ENCODE measurements at regions of chr2 and their contacts with region 1.

Region 1: DNA sequence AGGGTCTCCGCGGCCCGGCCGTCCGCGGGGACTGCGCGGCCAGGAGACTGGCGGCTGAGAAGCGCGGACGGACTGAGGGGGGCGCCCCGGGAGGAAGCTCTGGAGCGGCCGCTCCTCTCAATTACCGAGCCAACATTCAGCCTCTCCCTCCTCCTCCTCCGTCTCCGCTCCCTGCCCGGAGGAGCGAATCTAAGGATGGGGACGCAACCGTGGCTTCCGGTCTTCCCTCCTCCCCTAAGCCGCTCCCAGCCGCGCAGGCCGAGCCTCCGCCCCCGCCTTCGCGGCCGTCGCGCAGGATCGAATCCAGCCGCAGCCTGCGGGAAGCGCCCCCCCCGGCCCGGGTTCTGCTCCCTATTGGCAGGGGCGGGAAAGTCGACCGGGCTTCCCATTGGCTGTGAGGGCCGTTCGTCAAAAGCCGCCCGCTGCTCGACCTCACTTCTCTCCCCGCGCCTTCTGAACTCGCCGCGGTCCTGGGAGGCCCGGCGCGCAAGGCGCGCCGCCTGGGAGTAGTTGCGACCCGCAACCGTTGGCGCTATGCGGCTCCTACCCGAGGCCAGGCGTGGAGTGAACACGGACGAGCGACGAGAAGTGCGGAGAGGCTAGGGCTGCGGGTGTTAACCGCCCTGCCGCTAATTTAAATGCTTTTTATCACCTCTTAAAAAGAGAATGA is at the start of gene HNRNPLL:
- DNase-seq: peak; percentile 99
- H3K4me3 ChIP-seq: peak within 1 kb of the TSS; percentile 66 to 97 (median 74)
- H3K27ac ChIP-seq: peak within 1 kb of the TSS; percentile 86 to 99 (median 95)
- H3K4me1 ChIP-seq: peaks cover 0 to 45% (median 35%) of the 10 kb centered on the region in 4 donors
- H3K27me3 ChIP-seq: no peaks in the 10 kb centered on the region
- CTCF ChIP-seq: no peak
- EP300 ChIP-seq: peak in 1 of 4 donors; percentile 67
- POLR2A ChIP-seq: peak; percentile 94 to 96
- total RNA-seq, gene HNRNPLL: 63.7 to 82.0 (median 72.5) TPM

Region 2: GRCh38 chr2:38377050-38377828 is 225.6 kb before region 1 on chr2 and contains the start of gene ATL2:
- intact Hi-C with region 1: loop called (anchors 5 kb)
- DNase-seq: peak; percentile 98
- H3K4me3 ChIP-seq: peak within 1 kb of the TSS; percentile 80 to 98 (median 92)
- H3K27ac ChIP-seq: peak within 1 kb of the TSS; percentile 98 to 99 (median 99)
- H3K4me1 ChIP-seq: peaks cover 0 to 44% (median 27%) of the 10 kb centered on the region in 4 donors
- H3K27me3 ChIP-seq: no peaks in the 10 kb centered on the region
- CTCF ChIP-seq: no peak
- EP300 ChIP-seq: peak; percentile 13 to 76 (median 26)
- POLR2A ChIP-seq: peak; percentile 89 to 90
- total RNA-seq, gene ATL2: 176 to 271 (median 205) TPM

Region 3: DNA sequence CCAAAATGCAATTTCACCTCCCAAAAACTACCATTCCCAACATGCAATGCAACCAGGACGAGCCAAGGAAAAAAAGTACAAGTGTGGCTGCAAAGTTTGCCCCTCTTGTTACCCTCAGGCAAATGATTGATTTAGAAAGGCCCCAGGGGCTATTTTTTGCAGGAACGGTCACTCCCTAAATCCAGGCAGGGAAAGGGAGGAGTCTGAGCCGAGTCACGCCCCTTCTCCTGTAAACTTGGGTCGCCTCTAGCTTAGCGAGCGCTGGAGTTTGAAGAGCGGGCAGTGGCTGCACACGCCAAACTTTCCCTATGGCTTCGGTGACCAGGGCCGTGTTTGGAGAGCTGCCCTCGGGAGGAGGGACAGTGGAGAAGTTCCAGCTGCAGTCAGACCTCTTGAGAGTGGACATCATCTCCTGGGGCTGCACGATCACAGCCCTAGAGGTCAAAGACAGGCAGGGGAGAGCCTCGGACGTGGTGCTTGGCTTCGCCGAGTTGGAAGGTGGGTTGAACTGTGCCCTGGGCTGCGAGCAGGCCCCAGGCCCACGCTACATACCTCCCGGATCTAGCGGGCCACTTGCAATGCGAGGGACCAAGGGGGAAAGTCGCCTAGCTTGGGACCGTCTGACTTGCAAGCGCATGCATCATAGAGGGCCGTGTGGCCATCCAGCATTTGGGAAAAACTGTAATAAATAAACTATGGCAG is 63.1 kb after region 1 on chr2 and contains the start of gene GALM:
- intact Hi-C with region 1: loop called (anchors 2 kb)
- DNase-seq: peak; percentile 92
- H3K4me3 ChIP-seq: peak within 1 kb of the TSS; percentile 44 to 68 (median 52)
- H3K27ac ChIP-seq: peak within 1 kb of the TSS; percentile 65 to 82 (median 72)
- H3K4me1 ChIP-seq: peaks cover 0 to 20% (median 16%) of the 10 kb centered on the region in 4 donors
- H3K27me3 ChIP-seq: no peaks in the 10 kb centered on the region
- CTCF ChIP-seq: no peak
- EP300 ChIP-seq: peak in 1 of 4 donors; percentile 38
- POLR2A ChIP-seq: peak in 1 of 2 donors; percentile 54
- total RNA-seq, gene GALM: 9.5 to 35.2 (median 19.0) TPM

Region 4: GRCh38 chr2:38702413-38702812 is 99.5 kb after region 1 on chr2:
- intact Hi-C with region 1: no loop called
- DNase-seq: no peak
- H3K4me3 ChIP-seq: no peak overlapping the region
- H3K27ac ChIP-seq: no peak overlapping the region
- H3K4me1 ChIP-seq: peaks cover 0 to 14% (median 5%) of the 10 kb centered on the region in 4 donors
- H3K27me3 ChIP-seq: no peaks in the 10 kb centered on the region
- CTCF ChIP-seq: no peak
- EP300 ChIP-seq: no peak
- POLR2A ChIP-seq: no peak

Region 5: DNA sequence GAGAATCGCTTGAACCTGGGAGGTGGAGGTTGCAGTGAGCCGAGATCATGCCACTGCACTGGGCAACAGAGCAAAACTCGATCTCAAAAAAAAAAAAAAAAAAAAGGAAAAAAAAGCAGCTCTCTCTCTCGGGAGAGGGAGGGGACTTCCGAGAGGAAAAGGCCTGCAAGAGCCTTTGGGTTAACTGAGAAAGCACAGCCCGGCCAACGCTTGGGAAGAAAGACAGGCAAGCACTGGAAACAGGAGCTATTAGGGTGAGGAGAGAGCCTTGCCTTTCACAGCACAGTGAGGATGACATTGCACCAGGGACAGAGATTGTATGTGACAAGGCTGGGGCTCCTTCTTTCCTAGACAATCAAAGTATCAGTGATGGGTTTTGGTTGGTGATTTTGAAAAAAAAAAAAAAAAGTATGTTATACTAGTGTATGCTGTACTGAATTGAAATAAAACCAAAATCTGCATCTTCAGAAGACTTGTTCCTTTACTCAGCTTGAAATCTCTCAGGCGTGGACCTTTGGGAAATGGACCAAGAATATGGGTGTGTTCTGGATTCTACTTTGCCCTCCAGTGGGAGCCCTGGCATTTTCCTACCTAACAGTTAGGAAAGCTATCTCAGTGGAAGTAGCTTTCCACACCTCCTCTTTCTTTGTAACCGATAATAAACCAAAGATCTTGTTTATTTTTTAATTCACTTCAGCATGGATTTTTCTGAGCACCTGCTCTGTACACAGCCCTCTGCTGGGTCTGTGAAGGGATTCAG is 131.6 kb after region 1 on chr2:
- intact Hi-C with region 1: loop called (anchors 5 kb)
- DNase-seq: no peak
- H3K4me3 ChIP-seq: no peak overlapping the region
- H3K27ac ChIP-seq: peak overlapping the region in 3 of 4 donors; percentile 81 to 85 (median 81)
- H3K4me1 ChIP-seq: peaks cover 0 to 40% (median 22%) of the 10 kb centered on the region in 4 donors
- H3K27me3 ChIP-seq: no peaks in the 10 kb centered on the region
- CTCF ChIP-seq: no peak
- EP300 ChIP-seq: no peak
- POLR2A ChIP-seq: no peak

Region 6: DNA sequence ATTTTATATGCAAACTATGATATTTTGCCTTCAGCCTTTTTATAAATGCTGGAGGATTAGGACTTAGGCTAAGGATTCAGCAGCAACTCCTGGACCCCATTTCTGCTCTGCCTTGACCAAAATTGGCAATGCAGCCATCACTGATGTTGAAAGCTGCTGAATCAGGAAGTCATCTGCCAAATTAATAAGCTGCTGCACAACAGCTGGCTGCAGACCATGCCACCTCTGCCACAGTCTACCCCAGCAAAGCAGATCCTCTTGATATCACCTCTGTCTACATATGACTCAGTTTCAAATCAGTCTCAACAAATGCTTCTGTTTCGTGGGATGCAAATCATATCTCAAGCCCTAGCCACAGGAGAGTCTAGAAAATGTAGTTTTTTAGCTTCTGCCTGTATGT is 525.1 kb after region 1 on chr2:
- intact Hi-C with region 1: no loop called
- DNase-seq: no peak
- H3K4me3 ChIP-seq: no peak overlapping the region
- H3K27ac ChIP-seq: peak overlapping the region in 1 of 4 donors; percentile 65
- H3K4me1 ChIP-seq: peaks cover 0 to 13% (median 11%) of the 10 kb centered on the region in 4 donors
- H3K27me3 ChIP-seq: no peaks in the 10 kb centered on the region
- CTCF ChIP-seq: no peak
- EP300 ChIP-seq: no peak
- POLR2A ChIP-seq: no peak

Measured in sigmoid colon (tissue), 7 donors.